Activated naive CD4-positive, alpha-beta T cell treated with anti-CD3 and anti-CD28 coated beads for 36 hours (primary cell): ENCODE measurements at regions of chr10 and their contacts with region 1.

Region 1: DNA sequence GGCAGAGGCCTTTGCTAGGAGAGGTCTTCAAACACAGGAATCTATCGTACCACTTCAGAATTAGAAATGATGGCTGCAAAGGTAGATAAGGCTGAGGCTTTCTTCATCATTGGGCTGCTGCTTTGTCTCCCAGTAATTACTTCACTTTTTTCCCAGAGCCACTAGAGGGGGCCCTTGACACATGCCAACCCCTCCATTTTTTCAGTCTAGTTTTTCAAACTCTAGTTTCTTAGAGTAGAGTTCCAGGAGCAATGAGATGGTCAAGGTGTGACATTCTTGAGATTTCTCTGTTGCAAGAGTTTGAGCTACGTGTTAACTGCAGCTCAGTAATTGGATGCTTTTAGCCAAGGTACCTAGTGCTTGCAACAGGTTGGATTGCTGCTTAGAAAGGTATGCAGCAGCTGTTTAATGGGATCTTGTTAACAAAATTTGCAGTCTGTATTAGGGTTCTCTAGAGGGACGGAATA is 33.8 kb upstream of the RBM20 start:
- DNase-seq: peak; percentile 75
- H3K4me3 Mint-ChIP-seq: no peak overlapping the region
- H3K27ac Mint-ChIP-seq: no peak overlapping the region
- H3K4me1 Mint-ChIP-seq: peaks cover 26% of the 10 kb centered on the region
- H3K27me3 Mint-ChIP-seq: no peaks in the 10 kb centered on the region

Region 2: GRCh38 chr10:110497438-110498086 is 112.8 kb before region 1 on chr10 and contains the start of gene DUSP5:
- CTCF ChIA-PET with region 1: no interaction called
- intact Hi-C with region 1: no loop called
- DNase-seq: peak; percentile 94
- H3K4me3 Mint-ChIP-seq: peak within 1 kb of the TSS; percentile 97
- H3K27ac Mint-ChIP-seq: peak within 1 kb of the TSS; percentile 94
- H3K4me1 Mint-ChIP-seq: peaks cover 43% of the 10 kb centered on the region
- H3K27me3 Mint-ChIP-seq: no peaks in the 10 kb centered on the region
- total RNA-seq, gene DUSP5: 51.0 to 53.5 TPM

Region 3: GRCh38 chr10:110671788-110672579 is 61.6 kb after region 1 on chr10:
- CTCF ChIA-PET with region 1: interaction called, 24 read pairs
- intact Hi-C with region 1: loop called (anchors 1 kb)
- DNase-seq: peak; percentile 76
- H3K4me3 Mint-ChIP-seq: peak overlapping the region; percentile 75
- H3K27ac Mint-ChIP-seq: no peak overlapping the region
- H3K4me1 Mint-ChIP-seq: peaks cover 2% of the 10 kb centered on the region
- H3K27me3 Mint-ChIP-seq: no peaks in the 10 kb centered on the region

Region 4: GRCh38 chr10:110746254-110746826 is 136.0 kb after region 1 on chr10:
- CTCF ChIA-PET with region 1: interaction called, 10 read pairs
- intact Hi-C with region 1: loop called (anchors 1 kb)
- DNase-seq: peak; percentile 64
- H3K4me3 Mint-ChIP-seq: no peak overlapping the region
- H3K27ac Mint-ChIP-seq: no peak overlapping the region
- H3K4me1 Mint-ChIP-seq: peaks cover 72% of the 10 kb centered on the region
- H3K27me3 Mint-ChIP-seq: no peaks in the 10 kb centered on the region

Region 5: GRCh38 chr10:110893559-110894179 is 283.3 kb after region 1 on chr10:
- CTCF ChIA-PET with region 1: interaction called, 4 read pairs
- intact Hi-C with region 1: loop called (anchors 1 kb)
- DNase-seq: no peak
- H3K4me3 Mint-ChIP-seq: no peak overlapping the region
- H3K27ac Mint-ChIP-seq: no peak overlapping the region
- H3K4me1 Mint-ChIP-seq: peaks cover 42% of the 10 kb centered on the region
- H3K27me3 Mint-ChIP-seq: no peaks in the 10 kb centered on the region

Region 6: GRCh38 chr10:111207500-111207899 is 597.2 kb after region 1 on chr10:
- CTCF ChIA-PET with region 1: no interaction called
- intact Hi-C with region 1: loop called (anchors 1 kb)
- DNase-seq: peak; percentile 65
- H3K4me3 Mint-ChIP-seq: no peak overlapping the region
- H3K27ac Mint-ChIP-seq: no peak overlapping the region
- H3K4me1 Mint-ChIP-seq: no peaks in the 10 kb centered on the region
- H3K27me3 Mint-ChIP-seq: peaks cover 2% of the 10 kb centered on the region

Region 7: DNA sequence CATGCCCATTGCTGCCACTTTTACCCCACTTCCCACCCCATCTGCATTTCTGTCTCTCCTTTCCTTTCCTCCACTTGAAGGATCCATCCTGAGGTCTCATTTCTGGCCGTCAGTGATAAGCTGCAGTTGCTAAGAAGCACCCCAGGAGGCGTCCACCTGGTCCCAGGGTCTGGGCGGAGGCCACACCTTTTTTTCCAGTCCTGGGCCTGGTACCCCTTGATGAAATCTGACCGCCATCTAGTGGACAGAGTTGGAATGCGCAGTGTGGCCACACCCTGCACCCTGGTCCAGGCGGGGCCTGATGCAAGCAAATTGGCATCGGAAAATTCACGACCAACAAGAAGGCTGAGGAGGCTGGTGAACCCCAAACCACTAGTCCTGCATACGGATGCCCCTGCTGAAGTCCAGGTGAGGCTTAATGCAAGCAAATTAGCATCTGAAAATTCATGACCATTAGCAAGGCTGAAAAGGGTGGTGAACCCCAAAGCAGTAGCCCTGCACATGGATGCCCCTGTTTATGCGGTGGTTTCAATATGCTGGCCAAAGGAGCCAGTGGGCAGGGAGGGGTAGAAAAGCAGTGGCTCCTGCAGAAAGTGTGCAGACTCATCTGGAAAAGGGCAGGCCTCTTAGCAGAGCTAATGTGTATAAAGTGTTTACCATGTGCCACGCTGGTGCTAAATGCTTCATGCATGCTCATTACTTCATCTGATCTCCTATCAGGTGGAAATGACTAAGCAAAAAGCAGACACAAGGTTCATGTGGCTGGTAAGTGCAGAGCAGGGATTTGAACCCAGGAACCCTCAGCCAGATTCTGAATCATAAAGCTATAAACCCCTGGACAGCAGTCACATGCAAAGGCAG is 1530.0 kb after region 1 on chr10:
- CTCF ChIA-PET with region 1: interaction called, 3 read pairs
- intact Hi-C with region 1: loop called (anchors 1 kb)
- DNase-seq: peak; percentile 87
- H3K4me3 Mint-ChIP-seq: no peak overlapping the region
- H3K27ac Mint-ChIP-seq: peak overlapping the region; percentile 61
- H3K4me1 Mint-ChIP-seq: no peaks in the 10 kb centered on the region
- H3K27me3 Mint-ChIP-seq: peaks cover 4% of the 10 kb centered on the region